Psoas muscle (tissue), 8 donors: ENCODE measurements at regions of chrX and their contacts with region 1.

Region 1: GRCh38 chrX:53071604-53072417 is 10.4 kb upstream of the TSPYL2 start:
- DNase-seq: peak; percentile 65 to 87
- ATAC-seq: peak; percentile 86 to 96 (median 93)
- H3K4me3 ChIP-seq: peak overlapping the region; percentile 38
- H3K27ac ChIP-seq: peak overlapping the region; percentile 46
- H3K4me1 ChIP-seq: no peaks in the 10 kb centered on the region
- H3K27me3 ChIP-seq: peaks cover 0 to 26% (median 0%) of the 10 kb centered on the region in 3 donors
- CTCF ChIP-seq: peak; percentile 62

Region 2: GRCh38 chrX:53128097-53128749 is 56.4 kb after region 1 on chrX:
- intact Hi-C with region 1: no loop called
- DNase-seq: no peak
- ATAC-seq: peak in 1 of 4 donors; percentile 50
- H3K4me3 ChIP-seq: no peak overlapping the region
- H3K27ac ChIP-seq: peak overlapping the region; percentile 7
- H3K4me1 ChIP-seq: no peaks in the 10 kb centered on the region
- H3K27me3 ChIP-seq: peaks cover 0 to 11% (median 0%) of the 10 kb centered on the region in 3 donors
- CTCF ChIP-seq: no peak

Region 3: DNA sequence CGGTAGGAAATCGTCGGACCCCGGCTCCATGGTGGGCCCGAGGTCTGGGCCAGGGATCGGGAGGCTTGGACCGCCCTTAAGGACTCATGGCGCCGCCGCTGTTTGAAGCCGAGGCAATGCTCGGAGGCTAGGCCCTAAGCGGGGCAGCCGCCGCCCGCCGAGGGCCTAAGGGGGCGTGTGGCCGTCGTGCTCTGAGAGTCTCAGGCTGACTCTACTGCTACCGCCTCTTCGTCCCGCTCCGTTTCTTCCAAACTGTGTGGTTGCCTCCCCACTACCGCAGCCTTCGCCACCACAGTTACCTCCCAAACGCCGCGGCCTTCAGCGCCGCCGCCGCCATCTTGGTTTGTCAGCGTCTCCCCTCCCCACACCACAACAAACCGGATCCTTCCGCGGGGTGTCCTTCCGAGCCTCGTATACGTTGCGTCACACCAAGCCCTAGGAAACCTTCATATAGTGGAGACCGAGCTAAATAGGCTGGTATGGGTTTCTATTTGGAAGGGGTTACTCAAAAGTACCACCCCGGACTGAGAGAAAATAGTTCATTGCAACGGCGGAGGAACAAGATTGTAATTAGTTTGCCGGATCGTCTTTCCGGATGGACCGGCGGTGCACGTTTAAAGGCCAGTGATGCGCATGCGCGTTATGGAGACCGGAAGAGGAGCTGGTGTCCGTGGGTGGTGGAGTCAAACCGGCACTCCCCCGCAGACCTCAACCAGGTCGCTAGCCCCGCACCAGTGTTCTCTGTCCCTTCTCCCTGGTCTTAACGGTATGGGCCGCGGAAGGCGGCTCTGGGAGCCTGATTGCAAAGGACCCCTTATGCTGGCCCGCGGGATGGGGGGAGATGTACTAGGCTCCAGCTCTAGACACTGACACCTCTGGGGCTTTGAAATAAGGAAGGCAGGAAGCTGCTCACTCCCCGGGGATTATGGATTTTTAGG is 153.3 kb after region 1 on chrX and contains the start of gene KDM5C:
- intact Hi-C with region 1: loop called in 1 of 2 experiments (anchors 2 kb)
- DNase-seq: peak; percentile 95 to 97
- ATAC-seq: peak; percentile 80 to 87 (median 84)
- H3K4me3 ChIP-seq: peak within 1 kb of the TSS; percentile 97
- H3K27ac ChIP-seq: peak within 1 kb of the TSS; percentile 95
- H3K4me1 ChIP-seq: peaks cover 20% of the 10 kb centered on the region
- H3K27me3 ChIP-seq: no peaks in the 10 kb centered on the region
- CTCF ChIP-seq: no peak
- total RNA-seq, gene KDM5C: 62.2 to 119 (median 96.0) TPM

Region 4: GRCh38 chrX:53746718-53747117 is 674.9 kb after region 1 on chrX:
- intact Hi-C with region 1: loop called in 1 of 2 experiments (anchors 5 kb)
- DNase-seq: no peak
- ATAC-seq: no peak
- H3K4me3 ChIP-seq: no peak overlapping the region
- H3K27ac ChIP-seq: no peak overlapping the region
- H3K4me1 ChIP-seq: no peaks in the 10 kb centered on the region
- H3K27me3 ChIP-seq: no peaks in the 10 kb centered on the region
- CTCF ChIP-seq: no peak